GM10248 (cell line): ENCODE measurements at regions of chr15 and their contacts with region 1.

Region 1: GRCh38 chr15:66386204-66387123 is at the start of gene MAP2K1:
- DNase-seq: peak; percentile 96
- CTCF ChIP-seq: peak; percentile 75

Region 2: GRCh38 chr15:66369773-66370651 is 16.5 kb before region 1 on chr15:
- CTCF ChIA-PET with region 1: interaction called, 24 read pairs
- POLR2A ChIA-PET with region 1: no interaction called
- DNase-seq: peak; percentile 53
- CTCF ChIP-seq: no peak

Region 3: GRCh38 chr15:66401130-66402021 is 14.9 kb after region 1 on chr15:
- CTCF ChIA-PET with region 1: interaction called, 94 read pairs
- POLR2A ChIA-PET with region 1: interaction called, 5 read pairs
- DNase-seq: no peak
- CTCF ChIP-seq: peak; percentile 33

Region 4: GRCh38 chr15:66411190-66411589 is 24.7 kb after region 1 on chr15:
- CTCF ChIA-PET with region 1: interaction called, 94 read pairs
- POLR2A ChIA-PET with region 1: no interaction called
- DNase-seq: no peak
- CTCF ChIP-seq: no peak